Activated naive CD4-positive, alpha-beta T cell treated with anti-CD3 and anti-CD28 coated beads, Interleukin-2, amount 10 ng/mL, durations not matched to agents 7 days and 5 days (primary cell): ENCODE measurements at regions of chr1 and their contacts with region 1.

Region 1: DNA sequence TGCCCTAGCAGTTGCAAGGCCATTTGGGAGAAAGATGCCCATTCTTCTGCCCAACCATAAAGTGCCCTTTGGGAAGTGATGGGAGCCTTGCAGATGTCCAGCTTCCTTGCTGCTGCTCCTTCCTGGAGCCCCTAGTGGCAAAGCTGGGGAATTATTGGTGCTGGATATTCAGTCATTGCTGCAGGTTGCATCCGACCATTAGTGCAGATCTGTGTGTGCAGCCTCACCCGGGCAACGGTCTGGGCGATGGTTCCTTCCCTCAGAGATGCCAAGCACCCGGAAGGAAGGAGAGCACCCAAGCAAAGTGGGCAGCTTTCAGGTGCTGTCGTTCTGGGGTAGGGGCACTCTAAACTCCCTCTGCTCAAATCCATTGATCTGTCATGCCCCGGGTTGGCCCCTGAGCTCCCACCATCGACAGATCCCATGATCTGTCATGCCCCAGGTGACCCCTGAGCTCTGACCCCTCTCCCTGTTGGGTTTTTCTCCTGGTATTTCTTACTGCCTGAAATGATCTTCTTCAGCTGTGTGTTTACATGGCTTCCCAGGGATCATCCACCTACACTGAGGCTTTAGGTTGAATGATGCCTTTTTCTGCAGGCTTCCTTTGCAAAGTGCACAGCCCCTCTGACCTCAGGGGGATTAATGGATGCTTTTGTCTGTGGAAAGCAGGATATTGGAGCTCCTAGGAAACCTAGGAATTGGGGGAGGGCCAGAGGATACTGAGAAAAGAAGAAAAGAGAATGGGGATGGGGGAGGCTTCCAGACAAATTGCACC is 467.5 kb downstream of the PTPRU start:
- DNase-seq: no peak
- H3K4me3 Mint-ChIP-seq: no peak overlapping the region
- H3K27ac Mint-ChIP-seq: no peak overlapping the region
- H3K4me1 Mint-ChIP-seq: peaks cover 7% of the 10 kb centered on the region
- H3K27me3 Mint-ChIP-seq: peaks cover 53% of the 10 kb centered on the region

Region 2: DNA sequence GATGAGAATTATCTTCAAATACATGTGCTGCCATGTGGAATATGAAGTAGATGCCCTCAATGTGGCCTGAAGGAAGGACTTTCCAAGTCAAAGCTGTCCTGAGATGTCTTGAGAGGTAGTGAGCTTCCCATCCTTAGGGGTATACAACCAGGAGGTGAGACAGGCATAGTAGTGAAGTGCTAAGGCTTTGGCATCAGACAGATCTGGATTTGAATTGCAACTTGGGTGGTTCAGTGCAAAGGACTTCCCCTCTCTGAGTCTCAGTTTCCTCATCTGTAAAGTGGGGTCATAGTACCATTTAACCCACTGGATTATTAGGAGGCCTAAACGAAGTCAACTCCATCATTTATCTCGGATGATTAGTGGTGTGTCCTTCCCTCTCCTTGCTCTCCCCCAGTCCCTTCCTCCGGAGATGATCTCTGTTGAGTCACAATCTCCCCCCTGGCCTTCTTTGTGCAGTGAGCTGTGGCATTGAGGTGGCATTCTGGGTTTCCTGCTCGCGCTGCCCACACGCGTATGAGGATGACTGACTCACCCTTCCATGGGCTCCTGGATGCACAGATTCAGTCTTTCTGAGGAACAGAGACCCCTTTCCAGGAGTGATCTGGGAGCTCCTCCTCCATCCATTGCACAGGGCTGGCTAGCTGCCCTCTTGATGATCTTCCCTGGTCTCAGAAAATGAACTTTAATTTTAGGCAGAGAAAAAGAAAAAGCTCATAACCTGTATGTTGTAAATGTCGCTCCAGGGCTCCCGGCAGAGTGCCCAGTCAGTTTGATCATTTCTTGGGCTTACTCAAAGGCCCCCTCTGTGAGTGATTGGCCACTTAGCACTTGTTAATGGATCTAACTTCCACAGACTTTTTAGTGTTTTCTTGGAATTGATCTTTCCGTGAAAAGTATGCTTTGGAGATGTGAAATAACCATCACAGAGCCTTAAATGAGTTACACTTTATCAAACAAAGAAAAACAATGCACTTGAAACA is 112.9 kb before region 1 on chr1:
- CTCF ChIA-PET with region 1: no interaction called
- DNase-seq: no peak
- H3K4me3 Mint-ChIP-seq: no peak overlapping the region
- H3K27ac Mint-ChIP-seq: no peak overlapping the region
- H3K4me1 Mint-ChIP-seq: no peaks in the 10 kb centered on the region
- H3K27me3 Mint-ChIP-seq: no peaks in the 10 kb centered on the region

Region 3: DNA sequence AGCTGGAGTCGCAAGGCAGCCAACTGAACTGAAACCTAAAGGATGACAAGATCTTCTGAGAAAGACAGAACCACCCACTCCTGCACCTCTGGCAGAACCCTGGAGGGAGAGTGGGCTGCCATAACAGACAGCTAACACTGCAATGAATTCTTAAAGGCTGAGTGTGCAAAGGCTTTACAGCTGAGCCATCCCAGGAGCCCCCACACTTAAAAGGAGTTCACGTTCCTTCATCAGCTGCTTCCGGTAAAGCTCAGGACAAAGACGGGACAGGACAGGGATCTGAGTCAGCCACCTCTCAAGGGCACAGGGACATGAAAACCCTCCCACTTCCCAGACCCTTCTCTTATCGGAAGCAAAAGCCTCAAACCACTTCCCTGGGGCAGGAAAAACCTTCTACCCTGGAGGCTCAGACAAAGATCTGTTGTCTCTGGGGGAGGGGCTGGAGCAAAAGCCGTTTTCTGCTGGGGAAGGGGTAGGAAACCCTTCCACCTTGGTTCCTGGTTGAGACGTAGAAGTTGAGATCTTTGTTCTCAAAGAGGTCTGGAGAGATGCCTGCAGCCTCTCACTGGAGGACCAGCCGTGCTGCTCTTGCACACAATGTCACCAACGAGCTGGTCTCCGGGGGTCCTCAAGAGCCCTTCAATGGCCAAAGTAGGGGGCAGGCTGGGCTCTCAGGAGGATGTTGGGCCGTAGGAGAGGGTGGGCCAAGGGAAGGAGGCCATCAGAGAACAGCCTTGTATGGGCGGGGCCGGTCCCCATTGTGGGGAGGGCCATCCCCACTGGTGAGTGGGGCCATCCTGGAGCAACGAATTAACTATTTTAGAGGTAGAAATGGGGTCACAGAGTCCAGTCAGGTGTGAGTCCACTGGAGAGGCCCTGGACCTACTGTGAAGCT is 15.1 kb before region 1 on chr1:
- CTCF ChIA-PET with region 1: interaction called, 17 read pairs
- DNase-seq: no peak
- H3K4me3 Mint-ChIP-seq: no peak overlapping the region
- H3K27ac Mint-ChIP-seq: no peak overlapping the region
- H3K4me1 Mint-ChIP-seq: peaks cover 5% of the 10 kb centered on the region
- H3K27me3 Mint-ChIP-seq: peaks cover 12% of the 10 kb centered on the region